Stomach (tissue), 19 donors: ENCODE measurements at regions of chr3 and their contacts with region 1.

Region 1: DNA sequence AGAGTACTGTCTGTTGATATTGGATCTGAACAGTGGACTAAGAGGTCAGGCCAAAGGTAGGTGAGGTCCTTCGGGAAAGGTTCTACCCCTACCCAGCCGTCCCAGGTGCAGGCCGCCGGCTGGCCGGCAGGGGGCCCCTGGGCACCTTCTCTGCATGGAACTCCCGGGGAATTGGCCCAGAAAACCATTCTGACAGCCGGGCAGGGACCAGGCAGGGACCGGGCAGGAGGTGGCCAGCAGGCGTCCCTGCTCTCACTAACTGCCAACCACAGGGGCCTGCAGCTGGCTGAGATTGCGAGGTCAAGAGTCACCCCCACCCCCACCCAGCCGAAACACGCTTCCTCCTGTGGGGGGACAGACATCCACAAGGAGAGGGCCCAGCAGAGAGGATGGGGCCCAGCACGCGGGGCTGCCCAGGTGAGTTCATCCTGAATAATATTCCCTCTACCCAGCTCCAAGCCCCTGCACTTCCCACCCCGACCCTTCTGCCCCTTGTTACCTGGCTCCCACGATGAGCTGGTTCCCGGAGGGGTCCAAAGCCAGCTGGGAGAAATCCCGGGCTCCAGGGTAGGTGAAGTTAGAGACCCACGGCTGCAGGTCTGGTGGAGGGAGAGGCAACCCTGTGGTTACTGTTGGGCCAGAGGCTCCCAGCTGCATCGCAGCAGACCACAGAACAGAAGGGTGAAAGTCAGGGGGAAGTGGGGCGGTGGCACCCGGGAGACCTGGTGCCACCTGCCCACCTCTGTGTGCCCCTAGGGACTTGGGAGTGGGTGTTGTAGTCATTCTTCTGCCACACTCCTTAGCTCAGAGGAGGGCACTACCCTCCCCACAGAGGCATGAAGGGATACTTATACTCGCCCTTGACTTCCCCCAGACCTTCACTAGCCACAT is 84.4 kb downstream of the SEMA5B start:
- DNase-seq: peak; percentile 82 to 85
- H3K4me3 ChIP-seq: no peak overlapping the region
- H3K27ac ChIP-seq: no peak overlapping the region
- H3K4me1 ChIP-seq: peaks cover 0 to 24% (median 4%) of the 10 kb centered on the region in 4 donors
- H3K27me3 ChIP-seq: no peaks in the 10 kb centered on the region
- CTCF ChIP-seq: peak in 5 of 7 experiments; percentile 74 to 92 (median 89)
- EP300 ChIP-seq: no peak
- POLR2A ChIP-seq: no peak

Region 2: DNA sequence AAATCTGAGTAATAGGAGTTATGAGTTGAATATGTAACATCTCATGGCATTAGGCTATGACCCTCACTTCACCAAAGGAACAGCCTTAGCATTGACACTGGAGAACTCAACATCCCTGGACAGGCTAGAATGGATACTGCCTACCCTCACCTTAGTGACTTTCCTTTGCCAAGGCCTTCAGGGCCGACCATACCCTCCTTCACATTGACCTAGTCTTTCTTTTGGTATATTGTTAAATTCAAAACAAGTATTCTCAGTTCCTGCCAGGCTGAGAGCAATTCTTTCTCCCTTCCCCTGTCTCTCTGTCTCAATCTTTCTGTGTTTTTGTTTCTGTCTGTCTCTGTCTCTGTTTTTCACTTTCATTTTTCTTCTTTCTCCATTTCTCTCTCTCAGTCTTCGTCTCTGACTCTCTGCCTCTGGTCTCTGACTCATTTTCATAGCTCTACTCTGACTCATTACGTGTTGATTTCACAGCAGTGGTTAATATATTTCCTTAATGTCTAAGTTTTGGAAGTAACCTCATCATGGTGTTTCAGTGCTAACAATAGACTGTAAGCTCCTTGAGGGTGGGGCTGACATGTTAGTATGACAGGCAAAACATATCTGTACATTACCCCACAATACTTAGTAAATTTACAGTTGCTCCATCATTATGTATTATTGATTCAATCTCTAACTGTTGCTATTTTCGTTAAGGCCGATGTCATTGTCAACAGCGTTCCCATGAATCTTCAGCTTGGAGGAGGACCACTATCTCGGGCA is 333.2 kb before region 1 on chr3:
- intact Hi-C with region 1: no loop called
- DNase-seq: no peak
- H3K4me3 ChIP-seq: no peak overlapping the region
- H3K27ac ChIP-seq: no peak overlapping the region
- H3K4me1 ChIP-seq: no peaks in the 10 kb centered on the region
- H3K27me3 ChIP-seq: no peaks in the 10 kb centered on the region
- CTCF ChIP-seq: no peak
- EP300 ChIP-seq: no peak
- POLR2A ChIP-seq: no peak

Region 3: DNA sequence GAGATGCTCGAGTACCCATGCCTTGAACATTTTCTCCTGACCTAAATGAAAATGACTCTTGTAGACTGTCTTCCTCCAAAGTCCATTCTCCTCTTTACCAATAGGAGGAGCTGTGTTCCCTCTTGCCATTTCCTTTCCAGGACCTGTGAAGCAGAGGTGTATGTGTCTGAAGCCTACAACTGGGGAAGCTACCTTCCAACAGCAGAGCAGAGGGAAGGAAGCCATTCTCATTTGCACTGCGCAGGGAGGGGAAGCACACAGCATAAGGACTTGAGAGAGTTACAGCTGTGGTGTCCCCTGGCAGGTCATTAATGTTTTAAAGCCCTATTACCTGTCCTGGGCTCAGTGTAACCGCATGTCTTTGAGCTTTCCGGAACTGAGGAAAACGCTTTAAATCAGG is 188.3 kb before region 1 on chr3:
- intact Hi-C with region 1: no loop called
- DNase-seq: peak in 1 of 2 donors; percentile 65
- H3K4me3 ChIP-seq: no peak overlapping the region
- H3K27ac ChIP-seq: no peak overlapping the region
- H3K4me1 ChIP-seq: peaks cover 0 to 10% (median 7%) of the 10 kb centered on the region in 4 donors
- H3K27me3 ChIP-seq: no peaks in the 10 kb centered on the region
- CTCF ChIP-seq: peak in 5 of 7 experiments; percentile 50 to 64 (median 60)
- EP300 ChIP-seq: no peak
- POLR2A ChIP-seq: no peak

Region 4: DNA sequence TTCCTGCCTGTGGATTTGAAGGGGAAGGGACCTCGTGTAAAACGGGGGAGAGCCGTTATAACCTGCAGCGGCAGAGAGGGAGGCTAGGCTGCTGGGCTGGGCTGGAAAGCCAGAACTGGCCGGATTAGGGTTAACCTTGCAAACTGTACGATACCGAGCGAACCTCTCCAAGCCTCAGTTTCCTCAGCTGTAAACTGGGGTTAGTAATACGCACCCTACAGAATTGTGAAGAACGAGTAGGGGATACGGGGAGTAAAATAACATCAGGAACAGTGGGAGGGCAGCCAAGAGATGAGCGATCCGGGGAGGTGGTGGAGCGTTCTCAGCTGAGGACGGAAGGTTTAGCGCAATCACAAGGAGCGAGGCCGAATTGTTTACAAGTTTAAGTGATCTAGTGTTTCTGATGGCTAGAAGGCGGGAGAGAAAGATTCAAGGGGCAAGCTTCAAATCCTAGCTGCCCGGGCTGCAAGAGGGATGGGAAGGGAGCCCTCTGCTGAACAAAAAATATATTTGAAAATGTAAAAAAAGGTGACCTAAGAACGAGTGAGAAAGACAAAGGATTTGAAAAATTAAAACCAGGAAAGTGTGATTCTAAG is 85.1 kb after region 1 on chr3:
- intact Hi-C with region 1: loop called (anchors 5 kb)
- DNase-seq: peak in 1 of 2 donors; percentile 86
- H3K4me3 ChIP-seq: peak overlapping the region; percentile 53 to 87 (median 64)
- H3K27ac ChIP-seq: peak overlapping the region in 1 of 5 donors; percentile 40
- H3K4me1 ChIP-seq: peaks cover 29 to 35% (median 31%) of the 10 kb centered on the region in 4 donors
- H3K27me3 ChIP-seq: peaks cover 13 to 95% (median 60%) of the 10 kb centered on the region in 3 donors
- CTCF ChIP-seq: peak in 4 of 7 experiments; percentile 7 to 50 (median 22)
- EP300 ChIP-seq: no peak
- POLR2A ChIP-seq: no peak

Region 5: DNA sequence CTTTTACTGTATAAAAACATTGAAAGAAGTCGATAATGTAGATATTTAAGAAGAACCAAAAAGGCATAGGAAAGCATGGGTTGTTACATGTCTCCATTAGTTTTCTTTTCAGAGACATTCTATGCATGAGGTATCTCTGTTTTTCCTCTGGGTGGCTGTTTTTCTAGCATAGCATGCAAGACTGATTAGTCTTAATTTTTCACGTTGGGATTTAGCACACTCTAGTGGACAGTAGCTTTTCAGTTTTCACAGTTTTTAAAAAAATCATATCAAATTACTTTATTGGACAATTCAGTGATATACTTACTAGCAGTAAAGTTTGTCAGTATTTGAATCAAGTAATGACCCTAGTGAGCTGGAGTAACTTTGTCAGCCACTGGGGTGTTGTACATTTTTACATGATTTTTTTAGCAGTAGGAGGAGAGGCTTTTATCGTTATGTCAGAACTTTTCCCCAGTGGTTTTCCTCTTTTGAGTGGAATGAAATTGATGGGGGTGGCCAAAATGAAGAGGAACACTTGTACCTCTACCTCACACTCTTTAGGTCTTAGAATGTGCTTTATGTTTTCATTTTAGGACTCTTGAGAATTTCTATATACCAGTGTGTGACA is 315.7 kb after region 1 on chr3:
- intact Hi-C with region 1: loop called (anchors 10 kb)
- DNase-seq: peak in 1 of 2 donors; percentile 78
- H3K4me3 ChIP-seq: no peak overlapping the region
- H3K27ac ChIP-seq: no peak overlapping the region
- H3K4me1 ChIP-seq: no peaks in the 10 kb centered on the region
- H3K27me3 ChIP-seq: no peaks in the 10 kb centered on the region
- CTCF ChIP-seq: peak in 5 of 7 experiments; percentile 22 to 63 (median 40)
- EP300 ChIP-seq: no peak
- POLR2A ChIP-seq: no peak